Heart left ventricle (tissue), 16 donors: ENCODE measurements at regions of chr7 and their contacts with region 1.

Region 1: DNA sequence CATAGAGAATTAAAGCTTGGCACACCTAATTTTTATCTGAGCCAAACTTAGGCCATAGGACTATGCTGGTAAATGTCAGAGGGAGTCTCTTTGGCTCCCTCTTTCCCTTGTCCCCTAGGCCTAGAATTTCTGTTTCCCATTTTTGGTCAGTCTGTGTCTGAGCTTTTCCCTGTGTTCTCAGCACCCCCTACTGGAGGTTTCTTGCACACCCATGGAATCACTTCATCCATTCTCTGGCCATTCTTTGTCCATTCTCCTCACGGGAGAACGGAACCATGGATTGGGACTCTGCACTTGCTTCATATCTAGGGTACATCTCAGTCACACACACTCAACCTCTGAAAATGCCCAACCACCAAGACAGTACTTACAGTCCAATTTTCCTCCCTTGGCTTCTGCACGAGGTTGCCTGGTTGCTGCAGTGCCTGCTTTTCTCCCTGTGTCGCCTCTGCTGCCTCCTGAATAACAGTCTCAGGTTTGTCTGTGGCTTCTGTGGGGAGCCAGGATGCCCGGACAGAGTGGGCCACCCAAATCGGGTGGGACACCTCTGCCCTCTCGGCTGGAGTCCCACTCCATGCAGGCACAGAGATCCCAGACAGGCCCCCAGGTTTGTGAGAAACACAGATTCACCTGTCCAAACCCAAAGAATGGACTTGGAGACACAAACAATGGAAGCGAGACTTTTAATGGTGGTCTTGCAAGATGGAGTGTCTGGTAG is 35.1 kb upstream of the DNAH11 start:
- DNase-seq: peak in 3 of 5 donors; percentile 9 to 33 (median 21)
- ATAC-seq: peak; percentile 47 to 72 (median 66)
- H3K4me3 ChIP-seq: no peak overlapping the region
- H3K27ac ChIP-seq: no peak overlapping the region
- H3K4me1 ChIP-seq: no peaks in the 10 kb centered on the region
- H3K27me3 ChIP-seq: no peaks in the 10 kb centered on the region
- CTCF ChIP-seq: peak; percentile 54 to 80 (median 66)
- POLR2A ChIP-seq: no peak

Region 2: DNA sequence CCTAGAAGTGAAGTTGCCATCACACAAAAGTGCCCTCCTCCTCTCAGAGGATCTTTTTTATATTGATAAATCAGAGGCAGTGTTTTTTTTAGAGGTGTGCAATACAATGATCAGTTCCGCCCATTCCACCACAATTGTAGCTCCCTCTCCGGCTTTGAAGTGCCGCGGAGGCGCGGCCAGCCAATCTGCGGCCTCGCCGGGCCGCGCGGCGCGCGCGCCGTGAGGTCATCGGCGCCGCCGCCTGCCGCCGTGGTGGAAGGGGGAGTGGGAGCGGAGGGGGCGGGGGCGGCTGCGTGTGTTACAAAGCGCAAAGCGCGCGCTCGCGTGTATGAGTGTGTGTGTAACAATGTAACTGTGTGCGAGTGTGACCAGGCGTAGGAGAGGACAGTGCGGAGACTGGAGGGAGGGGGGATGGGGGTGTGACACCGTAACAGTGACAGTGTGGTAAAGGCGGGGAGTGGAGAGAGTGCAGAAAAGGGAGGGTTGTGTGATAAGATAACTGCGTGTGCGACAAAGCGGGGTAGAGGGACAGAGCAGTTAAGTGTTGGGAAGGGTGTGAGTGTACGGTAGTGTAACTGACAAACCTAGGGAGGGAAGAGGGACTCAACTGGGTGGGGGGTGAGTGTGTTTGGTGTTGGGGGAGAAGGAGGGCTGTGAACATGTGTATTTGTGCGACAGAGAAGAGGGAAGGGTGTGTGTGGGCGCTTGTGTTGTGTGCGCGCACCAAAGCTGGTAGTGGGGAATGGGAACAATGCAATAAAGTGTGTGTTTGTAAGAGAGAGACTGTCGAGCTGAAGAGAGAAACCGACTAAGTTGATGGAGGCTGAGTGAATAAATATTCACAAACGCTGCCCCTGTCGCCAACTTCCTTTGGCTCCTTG is 720.8 kb before region 1 on chr7 and contains the start of gene SP8:
- intact Hi-C with region 1: loop called in 2 of 10 experiments (anchors 10 kb)
- DNase-seq: no peak
- ATAC-seq: peak in 1 of 4 donors; percentile 34
- H3K4me3 ChIP-seq: peak within 1 kb of the TSS in 11 of 12 donors; percentile 5 to 45 (median 29)
- H3K27ac ChIP-seq: no peak within 1 kb of the TSS
- H3K4me1 ChIP-seq: peaks cover 0 to 48% (median 18%) of the 10 kb centered on the region in 12 donors
- H3K27me3 ChIP-seq: peaks cover 61 to 100% (median 95%) of the 10 kb centered on the region in 9 donors
- CTCF ChIP-seq: no peak
- POLR2A ChIP-seq: no peak
- total RNA-seq, gene SP8: not detected

Region 3: DNA sequence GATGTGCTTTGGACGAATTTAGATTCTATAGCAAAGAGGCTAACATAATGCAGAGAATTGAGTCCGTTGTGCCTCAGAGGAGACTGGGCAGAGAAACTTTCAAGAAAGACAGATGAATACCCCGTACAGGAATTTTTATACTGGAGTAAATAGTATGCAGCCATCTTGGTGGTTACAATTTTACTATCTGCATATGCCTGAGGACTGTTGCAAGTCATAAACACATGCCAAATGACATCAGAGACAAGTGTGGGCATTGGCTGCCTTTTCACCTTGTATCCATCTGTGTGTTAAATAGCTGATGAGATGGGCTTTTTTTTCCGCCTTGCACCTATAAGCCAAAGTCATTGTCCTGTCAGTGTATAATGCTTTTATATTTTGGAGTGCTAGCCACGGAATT is 347.4 kb before region 1 on chr7:
- intact Hi-C with region 1: no loop called
- DNase-seq: no peak
- ATAC-seq: no peak
- H3K4me3 ChIP-seq: no peak overlapping the region
- H3K27ac ChIP-seq: no peak overlapping the region
- H3K4me1 ChIP-seq: no peaks in the 10 kb centered on the region
- H3K27me3 ChIP-seq: peaks cover 0 to 6% (median 0%) of the 10 kb centered on the region in 9 donors
- CTCF ChIP-seq: no peak
- POLR2A ChIP-seq: no peak

Region 4: GRCh38 chr7:21261627-21262594 is 245.9 kb before region 1 on chr7:
- intact Hi-C with region 1: loop called (anchors 1 to 5 kb)
- DNase-seq: peak in 1 of 5 donors; percentile 17
- ATAC-seq: peak in 2 of 4 donors; percentile 32 to 55
- H3K4me3 ChIP-seq: no peak overlapping the region
- H3K27ac ChIP-seq: no peak overlapping the region
- H3K4me1 ChIP-seq: no peaks in the 10 kb centered on the region
- H3K27me3 ChIP-seq: peaks cover 0 to 29% (median 0%) of the 10 kb centered on the region in 9 donors
- CTCF ChIP-seq: peak in 11 of 12 donors; percentile 19 to 46 (median 29)
- POLR2A ChIP-seq: no peak

Region 5: DNA sequence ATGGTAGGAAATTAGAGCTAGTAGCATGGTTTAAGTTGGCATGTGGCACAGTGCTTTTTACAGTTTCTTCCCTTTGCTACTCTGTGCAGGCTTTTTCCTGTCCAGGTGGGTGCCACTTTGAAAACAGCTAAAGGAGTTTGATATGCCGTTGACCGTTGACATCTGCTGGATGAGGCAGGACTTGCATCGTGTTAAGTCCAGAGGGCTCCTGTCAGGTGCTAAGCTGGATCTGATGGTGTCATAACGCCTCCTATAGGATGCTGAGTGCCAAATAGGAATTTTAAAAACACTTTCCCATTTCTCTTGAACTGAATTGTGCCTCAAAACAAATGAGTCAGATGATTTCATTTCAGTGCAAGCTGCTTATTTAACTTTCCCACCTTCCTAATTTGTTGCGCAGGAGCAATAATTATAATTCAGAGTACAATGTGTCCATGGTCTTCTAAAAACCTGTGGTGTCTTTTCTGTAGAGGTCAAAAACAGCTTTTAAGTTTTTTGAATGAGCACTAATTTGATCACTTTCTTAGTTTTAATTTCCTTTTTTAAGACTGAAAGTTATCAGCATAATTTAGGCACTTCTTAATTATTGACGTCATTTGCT is 259.6 kb after region 1 on chr7:
- intact Hi-C with region 1: loop called in 1 of 10 experiments (anchors 10 kb)
- DNase-seq: peak in 4 of 5 donors; percentile 15 to 47 (median 32)
- ATAC-seq: peak; percentile 66 to 94 (median 90)
- H3K4me3 ChIP-seq: no peak overlapping the region
- H3K27ac ChIP-seq: no peak overlapping the region
- H3K4me1 ChIP-seq: peaks cover 0 to 17% (median 2%) of the 10 kb centered on the region in 12 donors
- H3K27me3 ChIP-seq: peaks cover 0 to 5% (median 0%) of the 10 kb centered on the region in 9 donors
- CTCF ChIP-seq: peak in 10 of 12 donors; percentile 31 to 62 (median 47)
- POLR2A ChIP-seq: no peak

Region 6: GRCh38 chr7:22082886-22083703 is 575.3 kb after region 1 on chr7:
- intact Hi-C with region 1: loop called in 1 of 10 experiments (anchors 5 kb)
- DNase-seq: peak; percentile 87 to 94 (median 90)
- ATAC-seq: peak; percentile 89 to 99 (median 98)
- H3K4me3 ChIP-seq: peak overlapping the region; percentile 41 to 81 (median 66)
- H3K27ac ChIP-seq: peak overlapping the region; percentile 15 to 87 (median 80)
- H3K4me1 ChIP-seq: peaks cover 0 to 17% (median 7%) of the 10 kb centered on the region in 12 donors
- H3K27me3 ChIP-seq: peaks cover 0 to 24% (median 0%) of the 10 kb centered on the region in 9 donors
- CTCF ChIP-seq: peak; percentile 94 to 99 (median 98)
- POLR2A ChIP-seq: no peak

Region 7: GRCh38 chr7:22210355-22210754 is 702.6 kb after region 1 on chr7:
- intact Hi-C with region 1: no loop called
- DNase-seq: no peak
- ATAC-seq: no peak
- H3K4me3 ChIP-seq: no peak overlapping the region
- H3K27ac ChIP-seq: peak overlapping the region in 3 of 12 donors; percentile 15 to 24 (median 19)
- H3K4me1 ChIP-seq: peaks cover 5 to 90% (median 57%) of the 10 kb centered on the region in 12 donors
- H3K27me3 ChIP-seq: no peaks in the 10 kb centered on the region
- CTCF ChIP-seq: no peak
- POLR2A ChIP-seq: no peak